Heart right ventricle (tissue), 16 donors: ENCODE measurements at regions of chr2 and their contacts with region 1.

Region 1: DNA sequence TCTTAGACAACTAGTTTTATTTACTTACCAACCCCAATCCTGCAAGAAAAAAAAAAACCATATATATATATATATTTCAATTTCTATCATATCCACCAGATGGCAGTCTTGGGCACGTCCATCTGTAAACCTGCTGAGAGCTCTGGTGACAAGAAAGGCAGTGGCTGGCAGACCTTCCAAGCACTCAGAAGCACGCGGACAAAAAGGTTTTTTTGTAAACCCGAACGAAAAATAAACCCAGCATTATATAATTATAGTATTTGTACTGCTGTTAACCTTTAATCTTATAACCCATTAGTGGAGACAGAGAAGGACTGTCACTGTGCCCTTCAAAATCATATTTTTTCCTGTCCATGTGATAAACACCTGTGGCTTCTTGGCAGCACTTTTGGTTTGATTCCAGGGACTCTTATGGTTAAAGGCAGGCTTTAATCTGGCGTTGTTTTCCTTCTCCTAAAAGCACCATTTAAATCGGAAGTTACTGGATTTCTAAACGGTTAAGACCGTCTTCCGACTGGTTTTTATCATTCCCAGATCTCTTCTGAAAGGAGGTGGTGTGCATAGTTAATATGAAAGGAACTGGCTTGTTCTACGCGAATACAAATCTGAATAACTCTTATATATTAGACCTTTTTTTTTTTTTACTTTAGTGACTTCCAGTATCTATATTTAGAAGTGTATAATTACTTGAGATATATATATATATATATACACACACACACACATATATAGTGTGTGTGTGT is 31.0 kb upstream of the SLC3A1 start:
- DNase-seq: peak in 1 of 2 donors; percentile 62
- ATAC-seq: peak in 7 of 8 donors; percentile 65 to 82 (median 76)
- H3K4me3 ChIP-seq: peak overlapping the region in 9 of 10 donors; percentile 5 to 55 (median 47)
- H3K27ac ChIP-seq: no peak overlapping the region
- H3K4me1 ChIP-seq: peaks cover 0 to 16% (median 6%) of the 10 kb centered on the region in 9 donors
- H3K27me3 ChIP-seq: no peaks in the 10 kb centered on the region
- CTCF ChIP-seq: peak; percentile 44 to 80 (median 68)

Region 2: GRCh38 chr2:42792583-42793333 is 1451.5 kb before region 1 on chr2 and contains the start of gene HAAO:
- intact Hi-C with region 1: no loop called
- DNase-seq: peak; percentile 44 to 67
- ATAC-seq: peak; percentile 38 to 80 (median 54)
- H3K4me3 ChIP-seq: peak within 1 kb of the TSS; percentile 50 to 75 (median 67)
- H3K27ac ChIP-seq: peak within 1 kb of the TSS; percentile 80 to 98 (median 90)
- H3K4me1 ChIP-seq: peaks cover 0 to 38% (median 7%) of the 10 kb centered on the region in 9 donors
- H3K27me3 ChIP-seq: peaks cover 0 to 21% (median 12%) of the 10 kb centered on the region in 7 donors
- CTCF ChIP-seq: peak in 6 of 9 donors; percentile 16 to 53 (median 34)
- total RNA-seq, gene HAAO: 0.80 to 5.0 (median 2.7) TPM

Region 3: GRCh38 chr2:44044281-44044720 is 200.0 kb before region 1 on chr2:
- intact Hi-C with region 1: loop called in 1 of 10 experiments (anchors 5 kb)
- DNase-seq: peak; percentile 78 to 81
- ATAC-seq: peak; percentile 79 to 98 (median 96)
- H3K4me3 ChIP-seq: no peak overlapping the region
- H3K27ac ChIP-seq: no peak overlapping the region
- H3K4me1 ChIP-seq: peaks cover 0 to 7% (median 3%) of the 10 kb centered on the region in 9 donors
- H3K27me3 ChIP-seq: peaks cover 0 to 4% (median 0%) of the 10 kb centered on the region in 7 donors
- CTCF ChIP-seq: peak; percentile 46 to 94 (median 88)

Region 4: DNA sequence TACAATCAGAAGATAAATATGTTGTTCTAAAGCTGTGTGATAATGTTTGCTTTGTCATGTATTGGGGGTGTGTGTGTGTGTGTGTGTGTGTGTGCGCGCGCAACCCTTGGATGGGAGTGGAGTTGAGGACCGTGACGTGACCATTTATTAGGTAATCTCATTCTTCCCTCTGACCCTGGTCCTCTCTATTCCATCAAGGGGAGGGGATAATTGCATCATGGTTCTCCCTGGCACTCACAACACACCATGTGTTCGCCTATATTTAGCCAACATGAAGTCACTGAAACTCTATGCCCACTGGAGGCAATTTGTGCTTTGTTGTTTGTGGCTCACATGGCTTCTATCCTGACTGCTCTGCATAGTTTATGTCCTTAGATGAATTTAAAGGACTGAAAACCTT is 168.8 kb before region 1 on chr2:
- intact Hi-C with region 1: loop called in 4 of 10 experiments (anchors 10 kb)
- DNase-seq: peak in 1 of 2 donors; percentile 13
- ATAC-seq: peak; percentile 65 to 94 (median 79)
- H3K4me3 ChIP-seq: no peak overlapping the region
- H3K27ac ChIP-seq: peak overlapping the region in 3 of 10 donors; percentile 26 to 57 (median 43)
- H3K4me1 ChIP-seq: peaks cover 0 to 5% (median 0%) of the 10 kb centered on the region in 9 donors
- H3K27me3 ChIP-seq: no peaks in the 10 kb centered on the region
- CTCF ChIP-seq: no peak

Region 5: DNA sequence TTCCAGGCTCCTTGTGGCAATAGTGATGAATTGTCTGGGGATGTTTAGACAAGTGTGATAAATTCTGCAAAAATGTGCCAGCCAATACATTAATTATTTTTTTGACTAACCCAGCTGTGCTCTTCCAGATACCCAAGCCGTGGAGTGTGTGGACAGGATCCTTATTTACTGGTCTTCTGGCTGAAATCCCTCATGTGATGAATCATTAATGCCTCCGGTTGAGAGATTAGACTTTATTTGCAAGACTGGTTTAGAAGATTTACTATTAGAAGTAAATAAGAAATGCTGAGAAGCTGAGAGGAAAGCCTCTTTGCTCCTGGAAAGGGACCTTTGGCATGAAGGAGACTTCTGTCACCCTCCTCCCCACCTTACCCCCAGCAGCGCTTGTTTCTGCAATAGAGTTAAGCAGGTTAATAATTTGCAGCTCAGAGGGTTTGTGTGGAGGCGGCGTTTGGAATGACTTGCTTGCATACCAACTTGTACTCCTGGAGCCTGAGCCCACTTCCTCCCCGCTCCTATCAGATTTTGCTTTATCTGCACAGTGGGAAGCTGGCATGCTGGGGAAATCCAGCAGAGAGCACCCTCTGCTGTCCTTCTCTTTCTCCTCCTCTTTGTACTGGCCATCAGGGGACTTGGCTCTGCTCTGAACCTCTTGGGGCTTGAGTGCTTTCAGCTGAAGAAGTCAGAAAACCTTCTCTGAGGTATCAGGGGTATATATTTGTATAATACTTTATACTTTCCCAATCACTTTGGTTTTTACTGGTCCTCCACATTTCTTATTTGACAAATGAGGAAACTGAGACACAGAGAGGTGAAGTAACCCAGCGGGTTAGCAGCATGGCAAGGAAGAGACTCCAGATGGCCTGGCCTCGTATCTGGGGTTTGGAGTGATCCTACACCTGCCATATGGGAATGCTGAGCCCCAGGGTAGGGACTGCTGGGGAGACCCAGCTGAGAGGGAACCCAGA is 47.3 kb after region 1 on chr2:
- intact Hi-C with region 1: loop called in 2 of 10 experiments (anchors 5 to 10 kb)
- DNase-seq: no peak
- ATAC-seq: peak in 5 of 8 donors; percentile 53 to 82 (median 65)
- H3K4me3 ChIP-seq: no peak overlapping the region
- H3K27ac ChIP-seq: no peak overlapping the region
- H3K4me1 ChIP-seq: peaks cover 0 to 9% (median 4%) of the 10 kb centered on the region in 9 donors
- H3K27me3 ChIP-seq: no peaks in the 10 kb centered on the region
- CTCF ChIP-seq: peak in 8 of 9 donors; percentile 27 to 57 (median 49)

Region 6: DNA sequence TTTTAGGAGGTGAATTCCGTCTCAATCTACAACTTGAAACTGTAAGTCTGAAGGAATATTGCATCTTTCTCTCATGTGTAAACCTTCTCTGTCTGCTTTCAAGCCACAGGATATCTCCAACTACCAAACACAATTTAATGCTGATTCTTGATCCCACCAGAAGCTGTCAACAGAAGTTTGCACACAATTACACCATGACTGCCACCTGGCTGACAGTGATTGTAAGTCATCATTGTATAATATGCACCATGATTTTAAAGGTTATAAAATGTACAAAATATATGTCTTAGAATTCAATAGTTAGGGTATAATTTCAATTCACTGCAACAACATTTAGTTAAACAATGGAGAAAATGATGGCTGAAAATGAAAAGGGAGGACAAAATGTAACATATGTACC is 98.6 kb after region 1 on chr2:
- intact Hi-C with region 1: loop called in 4 of 10 experiments (anchors 10 kb)
- DNase-seq: no peak
- ATAC-seq: peak in 1 of 8 donors; percentile 51
- H3K4me3 ChIP-seq: no peak overlapping the region
- H3K27ac ChIP-seq: no peak overlapping the region
- H3K4me1 ChIP-seq: peaks cover 0 to 11% (median 8%) of the 10 kb centered on the region in 9 donors
- H3K27me3 ChIP-seq: no peaks in the 10 kb centered on the region
- CTCF ChIP-seq: peak in 7 of 9 donors; percentile 17 to 55 (median 39)

Region 7: GRCh38 chr2:44955593-44956392 is 711.5 kb after region 1 on chr2:
- intact Hi-C with region 1: loop called in 4 of 10 experiments (anchors 5 to 10 kb)
- DNase-seq: peak; percentile 61 to 79
- ATAC-seq: peak; percentile 72 to 91 (median 84)
- H3K4me3 ChIP-seq: peak overlapping the region in 9 of 10 donors; percentile 13 to 49 (median 38)
- H3K27ac ChIP-seq: no peak overlapping the region
- H3K4me1 ChIP-seq: peaks cover 15 to 37% (median 29%) of the 10 kb centered on the region in 9 donors
- H3K27me3 ChIP-seq: peaks cover 14 to 98% (median 80%) of the 10 kb centered on the region in 7 donors
- CTCF ChIP-seq: peak; percentile 62 to 95 (median 91)